CD8-positive, alpha-beta T cell (primary cell): ENCODE measurements at regions of chr11 and their contacts with region 1.

Region 1: DNA sequence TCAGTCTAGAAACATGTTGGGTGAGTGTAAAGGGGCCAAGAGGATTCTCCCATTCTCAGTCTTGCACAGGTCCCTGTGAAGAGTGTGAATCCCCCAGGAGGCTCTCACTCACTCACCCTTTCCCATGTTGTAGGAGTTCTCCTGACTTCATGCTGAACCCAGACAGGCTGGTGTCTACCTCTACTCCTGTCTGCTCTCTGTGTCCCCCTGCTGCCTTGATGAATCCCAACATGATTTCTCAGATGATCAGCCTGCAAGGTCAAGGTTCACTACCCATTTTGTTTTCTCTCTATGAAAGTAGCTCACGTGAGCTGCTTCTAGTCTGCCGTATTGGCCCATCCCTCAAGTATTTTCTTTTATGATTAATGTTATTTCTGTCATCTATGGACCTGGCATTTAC is 500.6 kb downstream of the ETS1 start:
- DNase-seq: peak in 3 of 9 experiments; percentile 24 to 61 (median 47)
- ATAC-seq: peak; percentile 62
- H3K4me3 ChIP-seq: no peak overlapping the region
- H3K4me3 Mint-ChIP-seq: no peak overlapping the region
- H3K27ac ChIP-seq: no peak overlapping the region
- H3K27ac Mint-ChIP-seq: no peak overlapping the region
- H3K4me1 ChIP-seq: peaks cover 25% of the 10 kb centered on the region
- H3K4me1 Mint-ChIP-seq: peaks cover 45% of the 10 kb centered on the region
- H3K27me3 ChIP-seq: no peaks in the 10 kb centered on the region
- H3K27me3 Mint-ChIP-seq: no peaks in the 10 kb centered on the region
- CTCF ChIP-seq: no peak

Region 2: DNA sequence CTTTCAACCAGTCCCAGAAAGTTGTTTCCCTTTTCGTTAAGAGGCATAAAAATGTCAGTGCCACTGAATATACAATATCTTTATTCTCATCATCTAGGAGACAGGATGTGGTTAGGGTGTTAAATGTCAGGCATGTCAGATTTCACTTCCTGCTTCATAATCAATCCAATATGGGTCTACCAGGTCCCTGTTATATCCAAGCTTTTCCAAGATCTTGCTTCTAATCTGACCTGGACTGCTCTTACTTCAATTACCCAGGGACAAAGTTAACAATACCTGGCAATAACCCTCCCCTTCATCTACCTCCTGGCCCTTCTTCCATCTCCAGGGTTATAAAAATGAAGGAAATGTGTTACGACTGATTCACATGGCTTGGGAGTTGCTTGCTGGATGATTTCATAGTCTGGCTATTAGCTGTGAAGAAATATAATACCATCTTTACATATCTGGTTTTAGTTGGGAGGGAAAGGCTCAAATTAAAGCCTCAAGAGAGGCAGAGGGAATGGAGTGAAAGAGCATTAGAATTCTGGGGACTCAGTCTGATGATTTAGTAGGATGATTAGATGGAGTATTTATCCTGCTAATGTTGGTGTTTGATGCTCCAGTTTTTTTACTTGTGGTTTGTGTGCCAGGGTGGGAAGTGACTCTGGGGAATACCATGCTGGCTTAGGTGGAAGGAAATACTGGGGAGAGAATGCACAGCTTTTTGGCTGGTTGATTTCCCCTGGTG is 33.7 kb before region 1 on chr11:
- CTCF ChIA-PET with region 1: interaction called, 8 read pairs
- POLR2A ChIA-PET with region 1: interaction called, 4 read pairs
- intact Hi-C with region 1: loop called in 1 of 2 experiments (anchors 2 kb)
- DNase-seq: peak in 2 of 9 experiments; percentile 53 to 79
- ATAC-seq: peak; percentile 62
- H3K4me3 ChIP-seq: peak overlapping the region in 1 of 2 experiments; percentile 21
- H3K4me3 Mint-ChIP-seq: peak overlapping the region; percentile 67
- H3K27ac ChIP-seq: peak overlapping the region in 1 of 2 experiments; percentile 79
- H3K27ac Mint-ChIP-seq: peak overlapping the region; percentile 91
- H3K4me1 ChIP-seq: peaks cover 66% of the 10 kb centered on the region
- H3K4me1 Mint-ChIP-seq: peaks cover 82% of the 10 kb centered on the region
- H3K27me3 ChIP-seq: no peaks in the 10 kb centered on the region
- H3K27me3 Mint-ChIP-seq: no peaks in the 10 kb centered on the region
- CTCF ChIP-seq: no peak

Region 3: DNA sequence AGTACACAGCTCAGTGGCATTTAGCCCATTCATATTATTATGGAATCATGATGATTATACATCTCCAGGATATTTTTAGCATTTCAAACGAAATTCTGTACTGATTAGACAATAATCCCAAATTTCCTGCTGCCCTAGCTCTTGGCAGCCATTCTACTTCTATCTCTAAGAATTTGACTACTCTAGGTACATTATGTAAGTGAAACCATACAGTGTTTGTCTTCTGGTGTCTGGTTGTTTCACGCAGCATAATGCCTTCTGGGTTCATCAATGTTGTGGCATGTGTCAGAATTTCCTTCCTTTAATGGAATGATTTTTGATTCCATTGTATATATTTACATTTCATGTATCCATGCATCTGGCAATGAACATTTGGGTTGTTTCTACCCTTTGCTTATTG is 17.1 kb before region 1 on chr11:
- CTCF ChIA-PET with region 1: interaction called, 13 read pairs
- POLR2A ChIA-PET with region 1: no interaction called
- intact Hi-C with region 1: loop called in 1 of 2 experiments (anchors 2 kb)
- DNase-seq: no peak
- ATAC-seq: no peak
- H3K4me3 ChIP-seq: no peak overlapping the region
- H3K4me3 Mint-ChIP-seq: no peak overlapping the region
- H3K27ac ChIP-seq: no peak overlapping the region
- H3K27ac Mint-ChIP-seq: no peak overlapping the region
- H3K4me1 ChIP-seq: no peaks in the 10 kb centered on the region
- H3K4me1 Mint-ChIP-seq: peaks cover 5% of the 10 kb centered on the region
- H3K27me3 ChIP-seq: no peaks in the 10 kb centered on the region
- H3K27me3 Mint-ChIP-seq: no peaks in the 10 kb centered on the region
- CTCF ChIP-seq: no peak

Region 4: GRCh38 chr11:128098781-128099180 is 12.0 kb after region 1 on chr11:
- CTCF ChIA-PET with region 1: interaction called, 5 read pairs
- POLR2A ChIA-PET with region 1: no interaction called
- intact Hi-C with region 1: loop called in 1 of 2 experiments (anchors 2 kb)
- DNase-seq: no peak
- ATAC-seq: no peak
- H3K4me3 ChIP-seq: no peak overlapping the region
- H3K4me3 Mint-ChIP-seq: no peak overlapping the region
- H3K27ac ChIP-seq: no peak overlapping the region
- H3K27ac Mint-ChIP-seq: no peak overlapping the region
- H3K4me1 ChIP-seq: no peaks in the 10 kb centered on the region
- H3K4me1 Mint-ChIP-seq: no peaks in the 10 kb centered on the region
- H3K27me3 ChIP-seq: peaks cover 0 to 2% of the 10 kb centered on the region in 2 experiments
- H3K27me3 Mint-ChIP-seq: peaks cover 3% of the 10 kb centered on the region
- CTCF ChIP-seq: no peak